Posterior cingulate gyrus (tissue), 11 donors: ENCODE measurements at regions of chr2 and their contacts with region 1.

Region 1: DNA sequence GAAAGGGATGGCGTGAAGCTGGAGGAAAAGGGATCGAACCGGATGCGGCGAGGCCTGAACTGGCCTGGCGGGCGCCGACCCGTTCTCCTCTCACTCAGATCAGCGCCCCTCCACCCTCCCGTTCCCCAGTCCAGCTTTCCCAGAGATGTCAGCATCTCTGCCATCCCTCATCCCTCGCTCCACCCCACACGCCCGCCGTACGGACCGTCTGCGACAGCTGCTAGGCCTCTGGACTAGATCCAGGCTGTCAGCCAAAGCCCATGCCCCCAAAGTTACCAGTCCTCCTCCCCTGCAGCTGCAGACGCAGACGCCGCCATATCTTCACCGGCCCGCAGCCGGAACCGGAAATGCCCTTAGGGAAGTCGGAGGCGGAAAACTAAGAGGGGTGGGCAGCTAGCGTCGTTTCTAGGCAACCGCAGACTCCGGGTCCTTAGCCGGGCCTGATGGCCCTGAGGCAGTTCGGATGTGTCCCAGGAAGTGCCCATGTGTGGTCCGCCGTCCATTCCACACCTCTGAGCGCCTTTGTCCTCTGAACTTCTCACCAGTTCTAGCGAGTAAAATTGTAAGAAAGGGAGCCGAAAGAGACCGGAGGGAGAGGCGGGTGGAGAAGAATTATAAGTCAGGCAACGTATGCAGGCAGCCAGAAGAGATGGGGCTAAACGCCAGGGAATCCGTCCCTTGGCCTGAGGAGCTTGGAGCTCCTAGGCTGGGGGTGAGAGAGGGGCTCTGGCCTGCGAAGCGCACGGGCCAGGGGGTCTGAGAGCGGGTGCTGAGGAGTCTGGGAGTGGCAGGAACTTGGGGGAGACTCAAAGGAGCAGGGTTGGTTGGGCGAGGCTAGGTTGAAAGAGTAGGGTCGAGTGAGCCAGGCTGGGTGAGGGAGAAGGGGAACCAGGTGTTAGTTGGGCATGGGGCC is at the starts of genes RNF25 and STK36:
- DNase-seq: peak; percentile 83 to 98 (median 90)

Region 2: DNA sequence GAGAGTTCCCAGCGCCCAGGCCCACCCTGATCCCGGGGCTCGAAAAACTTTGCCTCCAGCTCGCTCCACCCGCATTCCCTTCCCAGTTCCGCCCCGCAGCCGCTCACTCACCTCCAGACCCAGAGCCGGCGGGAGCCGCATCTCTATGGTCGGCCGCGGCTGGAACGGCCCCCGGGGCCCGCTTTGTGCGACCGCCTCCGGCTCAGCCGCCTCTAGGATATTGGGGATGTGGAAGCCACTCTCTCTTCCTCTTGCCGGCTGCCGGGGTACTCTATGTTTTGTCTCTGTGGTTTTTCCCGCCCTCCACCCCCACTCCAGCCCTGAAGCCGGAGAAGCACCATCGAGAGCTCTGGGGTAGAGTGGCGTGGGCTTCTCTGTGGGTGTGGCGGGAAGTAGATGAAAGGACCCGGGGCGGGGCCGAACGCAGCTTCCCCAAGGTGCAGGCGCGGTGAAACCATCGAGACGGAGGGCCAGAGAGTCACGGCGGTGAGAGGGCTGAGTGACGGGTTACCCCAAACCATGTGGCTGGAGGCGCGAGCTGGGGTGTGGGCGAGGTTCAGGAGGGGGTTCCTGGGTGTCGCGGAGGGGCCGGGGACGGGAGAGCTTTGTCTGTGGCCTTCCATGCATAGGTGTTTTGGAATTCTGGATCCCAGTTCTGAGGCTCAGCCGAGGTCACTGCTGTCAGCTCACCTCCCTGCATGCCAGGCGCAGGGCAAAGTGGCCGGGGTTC is 12.5 kb before region 1 on chr2 and contains the starts of genes BCS1L and ZNF142:
- intact Hi-C with region 1: loop called (anchors 1 kb)
- DNase-seq: peak; percentile 88 to 99 (median 95)

Region 3: GRCh38 chr2:219109471-219109870 is 437.6 kb after region 1 on chr2:
- intact Hi-C with region 1: no loop called
- DNase-seq: no peak